Cardiac septum (tissue), 1 donor: ENCODE measurements at regions of chr11 and their contacts with region 1.

Region 1: GRCh38 chr11:110429731-110430266 is at the start of gene FDX1:
- DNase-seq: peak; percentile 92
- total RNA-seq, gene FDX1: 21.7 TPM

Region 2: DNA sequence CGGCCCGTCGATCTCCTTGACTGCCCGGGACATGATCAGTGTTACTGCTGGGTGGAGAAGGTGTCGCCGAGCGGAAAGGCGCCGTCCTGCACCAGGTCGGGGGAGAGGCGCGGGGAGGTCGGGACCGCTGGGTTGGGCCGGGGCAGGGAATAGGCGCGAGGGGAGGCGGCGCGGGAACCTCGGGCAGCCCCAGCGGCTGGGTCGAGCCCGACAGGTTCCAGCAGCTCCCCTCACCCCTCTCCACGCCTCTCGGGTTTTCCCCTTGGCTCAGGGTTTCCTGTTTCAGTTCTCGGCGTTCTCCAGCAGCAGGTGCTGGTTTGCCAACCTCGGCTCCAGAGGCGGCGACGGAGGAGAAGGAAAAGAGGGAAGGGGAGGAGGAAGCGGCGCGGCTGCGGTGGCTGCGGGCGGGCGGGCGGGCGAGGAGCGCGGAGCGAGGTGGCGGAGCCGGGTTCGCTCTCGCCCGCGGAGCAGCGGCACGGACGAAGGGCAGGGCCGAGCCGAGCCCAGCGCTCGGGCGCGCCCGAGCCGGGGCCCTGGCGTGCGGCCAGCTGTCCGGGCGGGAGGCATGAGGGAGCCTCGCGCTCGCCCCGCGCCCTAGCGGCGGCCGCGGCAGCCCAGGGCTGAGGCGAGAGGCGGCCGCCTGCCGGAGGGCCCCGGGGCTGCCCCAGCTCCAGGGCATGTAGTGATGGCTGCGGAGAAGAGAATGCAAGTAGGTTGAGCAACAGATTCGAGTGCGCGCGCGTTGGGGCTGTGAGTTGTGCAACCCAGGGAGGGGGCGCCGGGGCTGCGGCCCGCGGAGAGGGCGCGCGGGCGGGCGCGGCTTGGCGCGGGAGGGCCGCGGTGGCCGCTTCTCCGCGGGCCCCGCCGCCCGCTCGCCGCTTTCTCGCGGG is 337.0 kb before region 1 on chr11 and contains the start of gene ZC3H12C:
- intact Hi-C with region 1: loop called (anchors 10 kb)
- DNase-seq: peak; percentile 87
- total RNA-seq, gene ZC3H12C: 20.0 TPM

Region 3: GRCh38 chr11:110296226-110297075 is 133.3 kb before region 1 on chr11 and contains the start of gene RDX:
- intact Hi-C with region 1: loop called (anchors 5 kb)
- DNase-seq: peak; percentile 86
- total RNA-seq, gene RDX: 118 TPM

Region 4: DNA sequence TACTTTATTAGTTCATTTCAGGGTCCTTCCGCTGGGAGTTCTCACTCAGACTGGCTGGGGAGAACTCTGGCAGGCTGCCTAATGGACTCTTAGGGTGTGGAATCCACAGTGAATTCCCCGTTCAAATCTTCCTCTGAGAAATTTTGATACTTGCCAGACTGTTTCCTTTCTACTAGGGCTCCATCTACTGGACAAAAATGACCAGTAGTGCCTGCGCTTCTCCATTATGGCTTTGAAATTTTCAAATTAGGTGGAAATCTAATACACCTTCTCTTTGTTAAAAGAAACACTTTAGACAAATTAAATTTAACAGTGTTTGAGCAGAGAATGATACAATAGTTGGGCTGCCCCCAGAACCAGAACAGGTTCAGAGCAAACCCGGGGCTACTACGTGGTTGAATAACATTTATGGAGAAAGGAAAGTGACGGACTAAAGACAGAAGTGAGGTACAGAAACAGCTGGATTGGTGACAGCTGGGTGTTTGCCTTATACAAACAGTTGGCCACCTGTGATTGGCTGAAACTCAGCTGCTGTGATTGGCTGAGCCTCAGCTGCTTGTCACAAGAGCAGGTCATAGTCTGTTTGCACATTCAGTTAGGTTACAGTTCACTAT is 53.0 kb before region 1 on chr11:
- intact Hi-C with region 1: loop called (anchors 5 kb)
- DNase-seq: no peak